ENCODE measurements at regions of chr3 and their contacts with region 1.

Region 1: GRCh38 chr3:138594150-138594934 is at the start of gene CEP70:
- DNase-seq: peak; percentile 90
- ATAC-seq: peak; percentile 95
- H3K4me3 ChIP-seq: peak within 1 kb of the TSS; percentile 76 to 77
- H3K27ac ChIP-seq: peak within 1 kb of the TSS; percentile 84
- H3K4me1 ChIP-seq: peaks cover 5 to 13% of the 10 kb centered on the region in 2 experiments
- H3K27me3 ChIP-seq: no peaks in the 10 kb centered on the region
- CTCF ChIP-seq: peak; percentile 69 to 91 (median 89)
- POLR2A ChIP-seq: peak; percentile 82
- RAD21 ChIP-seq: peak; percentile 90
- total RNA-seq, gene CEP70: 38.7 TPM

Region 2: GRCh38 chr3:138417559-138417982 is 176.8 kb before region 1 on chr3:
- CTCF ChIA-PET with region 1: interaction called, 5 read pairs
- POLR2A ChIA-PET with region 1: no interaction called
- RAD21 ChIA-PET with region 1: no interaction called
- intact Hi-C with region 1: loop called (anchors 5 kb)
- DNase-seq: peak; percentile 77
- ATAC-seq: peak; percentile 99
- H3K4me3 ChIP-seq: no peak overlapping the region
- H3K27ac ChIP-seq: no peak overlapping the region
- H3K4me1 ChIP-seq: peaks cover 0 to 4% of the 10 kb centered on the region in 2 experiments; a peak in 1 of 4 replicates
- H3K27me3 ChIP-seq: no peaks in the 10 kb centered on the region
- CTCF ChIP-seq: peak; percentile 90 to 98 (median 98)
- POLR2A ChIP-seq: no peak
- RAD21 ChIP-seq: peak; percentile 89

Region 3: GRCh38 chr3:138923531-138923994 is 329.2 kb after region 1 on chr3:
- CTCF ChIA-PET with region 1: interaction called, 43 read pairs
- POLR2A ChIA-PET with region 1: interaction called, 19 read pairs
- RAD21 ChIA-PET with region 1: interaction called, 13 read pairs
- intact Hi-C with region 1: loop called (anchors 1 kb)
- DNase-seq: peak; percentile 82
- ATAC-seq: peak; percentile 83
- H3K4me3 ChIP-seq: 0 out of 4 replicates have a peak overlapping the region, but pooled peaks of 1 of the 2 experiments have one; percentile 25
- H3K27ac ChIP-seq: no peak overlapping the region
- H3K4me1 ChIP-seq: peaks cover 16 to 20% of the 10 kb centered on the region in 2 experiments
- H3K27me3 ChIP-seq: no peaks in the 10 kb centered on the region
- CTCF ChIP-seq: peak in 2 of 3 experiments; percentile 93 to 94; a peak in 4 of 6 replicates
- POLR2A ChIP-seq: no peak
- RAD21 ChIP-seq: no peak

Region 4: GRCh38 chr3:139006051-139006716 is 411.8 kb after region 1 on chr3 and contains the start of gene PRR23A:
- CTCF ChIA-PET with region 1: no interaction called
- POLR2A ChIA-PET with region 1: no interaction called
- RAD21 ChIA-PET with region 1: no interaction called
- intact Hi-C with region 1: no loop called
- DNase-seq: no peak
- ATAC-seq: no peak
- H3K4me3 ChIP-seq: no peak within 1 kb of the TSS
- H3K27ac ChIP-seq: no peak within 1 kb of the TSS
- H3K4me1 ChIP-seq: no peaks in the 10 kb centered on the region
- H3K27me3 ChIP-seq: no peaks in the 10 kb centered on the region
- CTCF ChIP-seq: no peak
- POLR2A ChIP-seq: no peak
- RAD21 ChIP-seq: no peak
- total RNA-seq, gene PRR23A: not detected

Region 5: GRCh38 chr3:139319428-139320402 is 725.4 kb after region 1 on chr3:
- CTCF ChIA-PET with region 1: no interaction called
- POLR2A ChIA-PET with region 1: interaction called, 3 read pairs
- RAD21 ChIA-PET with region 1: no interaction called
- intact Hi-C with region 1: loop called (anchors 10 kb)
- DNase-seq: no peak
- ATAC-seq: peak; percentile 65
- H3K4me3 ChIP-seq: no peak overlapping the region
- H3K27ac ChIP-seq: peak overlapping the region; percentile 94
- H3K4me1 ChIP-seq: peaks cover 52 to 72% of the 10 kb centered on the region in 2 experiments
- H3K27me3 ChIP-seq: no peaks in the 10 kb centered on the region
- CTCF ChIP-seq: peak in 2 of 3 experiments; percentile 82 to 90; a peak in 4 of 6 replicates
- POLR2A ChIP-seq: no peak
- RAD21 ChIP-seq: no peak

Measured in HCT116 (cell line).